Tibial artery (tissue), 4 donors: ENCODE measurements at regions of chr11 and their contacts with region 1.

Region 1: DNA sequence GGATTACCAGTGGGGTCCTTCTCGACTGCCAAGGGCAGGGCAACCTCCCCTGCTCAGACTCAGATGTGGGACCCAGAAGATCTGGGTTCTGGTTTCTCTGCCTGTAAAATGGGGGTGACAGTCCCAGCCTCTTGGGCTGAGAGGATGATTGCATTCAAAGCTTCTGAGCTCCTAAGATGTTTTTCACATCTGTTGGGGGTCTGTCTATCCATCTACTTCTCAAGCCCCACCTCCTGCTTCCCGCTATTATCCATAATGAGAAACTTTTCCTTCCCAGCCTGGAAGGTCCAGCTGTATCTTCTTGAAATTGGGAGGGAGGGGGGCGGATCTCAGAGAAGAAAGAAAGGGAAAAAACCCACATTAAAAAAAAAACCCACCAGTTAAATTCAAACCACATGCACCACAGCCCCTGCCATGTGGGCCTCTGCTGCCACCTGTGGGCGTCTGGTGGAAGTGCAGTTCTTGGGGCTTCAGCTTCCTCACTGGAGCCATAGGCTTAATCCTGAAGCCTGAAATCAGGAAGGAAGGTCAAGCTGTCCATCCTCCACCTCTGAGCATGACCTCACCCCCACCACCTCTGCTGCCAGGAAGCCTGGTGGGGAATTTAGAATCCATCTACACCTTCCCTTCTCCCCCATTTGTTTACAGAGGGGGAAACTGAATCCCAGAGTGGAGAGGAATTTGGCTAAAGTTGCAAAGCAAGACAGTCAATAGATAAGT is 27.3 kb downstream of the ARHGEF17 start:
- DNase-seq: peak; percentile 85 to 89
- H3K4me3 ChIP-seq: peak overlapping the region; percentile 0 to 5
- H3K27ac ChIP-seq: peak overlapping the region; percentile 80 to 86
- H3K4me1 ChIP-seq: peaks cover 10 to 99% (median 79%) of the 10 kb centered on the region in 4 donors
- H3K27me3 ChIP-seq: no peaks in the 10 kb centered on the region
- CTCF ChIP-seq: peak; percentile 94 to 99

Region 2: DNA sequence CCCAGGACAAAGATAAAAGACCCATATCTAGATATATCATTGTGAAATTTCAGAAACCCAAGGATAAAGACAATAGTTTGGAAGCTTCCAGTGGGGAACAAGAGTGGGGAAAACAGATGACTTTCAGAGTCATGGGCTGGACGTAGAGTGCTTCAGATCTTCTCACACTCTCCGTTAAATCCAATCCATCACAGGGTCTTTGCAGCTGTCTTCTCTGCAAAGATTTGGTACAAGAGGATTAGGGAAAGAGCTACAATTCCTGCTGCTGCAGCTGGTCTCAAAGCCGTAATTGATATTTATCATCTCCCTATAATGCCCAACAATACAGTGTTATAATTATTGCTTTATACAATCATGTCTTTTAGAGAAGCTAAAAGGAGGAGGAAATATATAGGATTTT is 837.6 kb before region 1 on chr11:
- intact Hi-C with region 1: no loop called
- DNase-seq: no peak
- H3K4me3 ChIP-seq: no peak overlapping the region
- H3K27ac ChIP-seq: no peak overlapping the region
- H3K4me1 ChIP-seq: no peaks in the 10 kb centered on the region
- H3K27me3 ChIP-seq: no peaks in the 10 kb centered on the region
- CTCF ChIP-seq: no peak

Region 3: DNA sequence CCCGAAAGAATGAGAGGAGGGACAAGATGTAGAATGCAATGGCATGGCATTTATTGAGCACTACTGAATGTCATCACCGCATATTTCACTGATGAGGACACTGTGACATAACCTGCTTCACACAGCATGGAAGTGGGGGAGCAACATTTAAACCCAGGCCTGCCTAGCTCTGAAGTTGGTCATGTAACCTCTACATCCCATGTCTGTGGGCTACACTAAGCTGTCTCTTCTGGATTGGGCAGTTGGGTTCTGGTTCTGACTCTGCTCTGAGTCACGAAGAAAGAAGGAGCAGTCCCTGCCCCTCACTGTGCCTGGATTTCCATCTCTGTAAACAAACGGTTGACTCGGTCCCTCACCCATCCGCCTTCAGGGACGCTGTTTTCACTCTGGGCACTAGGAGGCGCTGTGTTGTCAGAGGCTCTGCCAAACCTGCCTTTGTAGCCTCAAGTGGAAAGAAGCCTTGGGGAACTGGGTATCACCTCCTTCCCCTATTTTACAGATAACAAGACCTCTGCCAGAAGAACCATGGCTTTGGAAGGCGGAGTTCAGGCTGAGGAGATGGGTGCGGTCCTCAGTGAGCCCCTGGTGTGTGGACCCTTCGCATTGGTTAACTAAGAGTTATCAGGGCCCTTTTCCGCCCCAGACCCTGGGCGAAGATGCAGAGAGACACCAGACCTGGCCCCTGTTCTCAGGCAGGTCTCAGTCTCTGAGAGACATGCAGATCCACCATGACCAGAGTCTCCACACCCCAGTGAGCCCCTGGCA is 40.0 kb before region 1 on chr11:
- intact Hi-C with region 1: loop called (anchors 5 kb)
- DNase-seq: peak; percentile 61 to 84
- H3K4me3 ChIP-seq: no peak overlapping the region
- H3K27ac ChIP-seq: peak overlapping the region in 1 of 2 donors; percentile 10
- H3K4me1 ChIP-seq: peaks cover 0 to 11% (median 7%) of the 10 kb centered on the region in 4 donors
- H3K27me3 ChIP-seq: no peaks in the 10 kb centered on the region
- CTCF ChIP-seq: peak; percentile 83 to 88

Region 4: GRCh38 chr11:73307323-73308002 is 27.9 kb before region 1 on chr11:
- intact Hi-C with region 1: loop called (anchors 2 kb)
- DNase-seq: peak; percentile 98 to 99
- H3K4me3 ChIP-seq: peak overlapping the region; percentile 90 to 92
- H3K27ac ChIP-seq: peak overlapping the region; percentile 97
- H3K4me1 ChIP-seq: peaks cover 0 to 30% (median 22%) of the 10 kb centered on the region in 4 donors
- H3K27me3 ChIP-seq: no peaks in the 10 kb centered on the region
- CTCF ChIP-seq: peak; percentile 81 to 97